Activated CD4-positive, alpha-beta T cell treated with anti-CD3 and anti-CD28 coated beads for 36 hours (primary cell): ENCODE measurements at regions of chr17 and their contacts with region 1.

Region 1: GRCh38 chr17:64117981-64118979 is 11.7 kb downstream of the ERN1 start:
- DNase-seq: no peak
- ATAC-seq: no peak
- H3K4me3 Mint-ChIP-seq: no peak overlapping the region
- H3K27ac Mint-ChIP-seq: peak overlapping the region; percentile 83
- H3K4me1 Mint-ChIP-seq: peaks cover 82% of the 10 kb centered on the region
- H3K27me3 Mint-ChIP-seq: no peaks in the 10 kb centered on the region

Region 2: DNA sequence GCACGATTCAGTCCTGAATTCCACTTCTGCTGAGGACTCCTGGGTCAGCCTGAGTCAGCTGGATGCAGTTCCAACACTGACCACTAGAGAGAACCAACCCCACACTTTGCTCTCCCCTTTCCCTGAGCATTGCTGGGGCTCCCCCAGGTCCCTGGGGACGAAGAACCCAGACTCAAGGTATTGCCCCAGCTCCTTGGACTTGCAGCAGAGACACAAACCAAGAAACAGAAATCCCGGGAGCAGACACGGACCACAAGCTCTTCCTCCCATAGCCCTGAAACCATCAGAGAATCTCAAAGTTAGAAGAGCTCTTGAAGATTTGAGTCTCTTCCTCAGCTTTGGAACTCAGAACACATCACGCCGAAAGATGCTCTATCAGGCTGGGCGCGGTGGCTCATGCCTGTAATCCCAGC is 199.0 kb before region 1 on chr17:
- CTCF ChIA-PET with region 1: no interaction called
- POLR2A ChIA-PET with region 1: no interaction called
- intact Hi-C with region 1: no loop called
- DNase-seq: peak; percentile 84
- ATAC-seq: peak; percentile 99
- H3K4me3 Mint-ChIP-seq: no peak overlapping the region
- H3K27ac Mint-ChIP-seq: no peak overlapping the region
- H3K4me1 Mint-ChIP-seq: peaks cover 6% of the 10 kb centered on the region
- H3K27me3 Mint-ChIP-seq: no peaks in the 10 kb centered on the region

Region 3: GRCh38 chr17:64081802-64082799 is 36.2 kb before region 1 on chr17:
- CTCF ChIA-PET with region 1: interaction called, 4 read pairs
- POLR2A ChIA-PET with region 1: interaction called, 3 read pairs
- intact Hi-C with region 1: loop called in 1 of 2 experiments (anchors 1 kb)
- DNase-seq: peak; percentile 65
- ATAC-seq: peak; percentile 87
- H3K4me3 Mint-ChIP-seq: peak overlapping the region; percentile 56
- H3K27ac Mint-ChIP-seq: no peak overlapping the region
- H3K4me1 Mint-ChIP-seq: peaks cover 28% of the 10 kb centered on the region
- H3K27me3 Mint-ChIP-seq: no peaks in the 10 kb centered on the region

Region 4: DNA sequence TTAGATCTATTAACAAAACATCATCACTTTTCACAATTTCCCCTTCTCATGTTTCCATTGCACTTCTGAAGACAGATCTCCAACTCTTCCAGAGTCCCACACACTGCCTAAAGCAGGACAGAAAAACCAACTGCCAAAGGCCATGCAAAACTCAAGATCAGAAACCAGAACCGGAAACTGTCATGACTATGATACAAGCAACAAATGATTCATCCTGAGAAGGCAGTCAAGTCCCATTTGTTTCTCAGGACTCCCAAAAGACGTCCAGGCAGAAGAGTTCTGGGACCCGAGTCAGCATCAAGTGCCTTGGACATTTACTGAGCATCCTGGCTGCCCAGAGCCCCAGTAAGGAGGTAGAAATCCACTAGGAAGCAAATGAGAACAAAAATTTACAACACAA is 27.2 kb before region 1 on chr17:
- CTCF ChIA-PET with region 1: interaction called, 5 read pairs
- POLR2A ChIA-PET with region 1: no interaction called
- intact Hi-C with region 1: loop called in 1 of 2 experiments (anchors 2 kb)
- DNase-seq: peak; percentile 31
- ATAC-seq: peak; percentile 75
- H3K4me3 Mint-ChIP-seq: peak overlapping the region; percentile 51
- H3K27ac Mint-ChIP-seq: peak overlapping the region; percentile 96
- H3K4me1 Mint-ChIP-seq: peaks cover 85% of the 10 kb centered on the region
- H3K27me3 Mint-ChIP-seq: no peaks in the 10 kb centered on the region